Aorta (tissue), 5 donors: ENCODE measurements at regions of chr5 and their contacts with region 1.

Region 1: DNA sequence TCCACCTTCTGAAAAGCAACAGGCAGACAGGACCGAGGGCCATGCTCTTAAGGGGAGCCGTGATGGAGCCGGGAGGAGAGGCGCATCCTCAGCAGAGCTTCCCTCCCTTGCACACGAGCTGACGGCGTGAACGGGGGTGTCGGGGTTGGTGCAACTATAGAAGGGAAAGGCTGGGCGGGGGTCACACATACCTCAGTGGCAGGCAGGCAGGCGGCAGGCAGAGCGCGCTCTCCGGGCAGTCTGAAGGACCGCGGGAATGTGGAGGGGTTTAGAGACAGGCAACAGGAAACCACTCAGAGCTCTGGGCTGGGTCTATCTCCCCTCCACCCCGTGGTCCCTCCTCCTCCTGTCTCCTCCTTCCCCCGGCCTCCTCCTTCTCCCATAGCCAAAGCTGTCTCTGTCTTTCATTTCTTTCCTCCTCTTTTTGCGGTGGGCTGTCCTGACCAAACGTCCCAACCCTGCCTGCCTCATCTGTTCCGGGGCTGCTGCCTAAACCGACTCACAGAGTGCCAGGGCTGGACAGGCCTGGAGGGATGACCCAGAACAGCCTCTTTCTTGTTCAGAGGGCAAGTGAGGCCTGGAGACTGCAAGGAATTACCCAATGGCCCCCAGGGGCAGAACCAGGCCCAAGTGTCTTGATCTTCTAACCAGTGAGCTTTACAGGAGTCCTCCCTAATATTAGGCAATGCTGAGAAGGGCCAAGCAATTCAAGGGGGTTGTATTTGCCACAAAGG is at the start of gene SPARC:
- DNase-seq: peak; percentile 88 to 91
- ATAC-seq: peak; percentile 92
- H3K4me3 ChIP-seq: peak within 1 kb of the TSS; percentile 60 to 91
- H3K27ac ChIP-seq: peak within 1 kb of the TSS; percentile 78 to 90
- H3K4me1 ChIP-seq: peaks cover 8 to 13% of the 10 kb centered on the region in 2 donors
- H3K27me3 ChIP-seq: no peaks in the 10 kb centered on the region
- total RNA-seq, gene SPARC: 2,087 to 2,608 TPM

Region 2: DNA sequence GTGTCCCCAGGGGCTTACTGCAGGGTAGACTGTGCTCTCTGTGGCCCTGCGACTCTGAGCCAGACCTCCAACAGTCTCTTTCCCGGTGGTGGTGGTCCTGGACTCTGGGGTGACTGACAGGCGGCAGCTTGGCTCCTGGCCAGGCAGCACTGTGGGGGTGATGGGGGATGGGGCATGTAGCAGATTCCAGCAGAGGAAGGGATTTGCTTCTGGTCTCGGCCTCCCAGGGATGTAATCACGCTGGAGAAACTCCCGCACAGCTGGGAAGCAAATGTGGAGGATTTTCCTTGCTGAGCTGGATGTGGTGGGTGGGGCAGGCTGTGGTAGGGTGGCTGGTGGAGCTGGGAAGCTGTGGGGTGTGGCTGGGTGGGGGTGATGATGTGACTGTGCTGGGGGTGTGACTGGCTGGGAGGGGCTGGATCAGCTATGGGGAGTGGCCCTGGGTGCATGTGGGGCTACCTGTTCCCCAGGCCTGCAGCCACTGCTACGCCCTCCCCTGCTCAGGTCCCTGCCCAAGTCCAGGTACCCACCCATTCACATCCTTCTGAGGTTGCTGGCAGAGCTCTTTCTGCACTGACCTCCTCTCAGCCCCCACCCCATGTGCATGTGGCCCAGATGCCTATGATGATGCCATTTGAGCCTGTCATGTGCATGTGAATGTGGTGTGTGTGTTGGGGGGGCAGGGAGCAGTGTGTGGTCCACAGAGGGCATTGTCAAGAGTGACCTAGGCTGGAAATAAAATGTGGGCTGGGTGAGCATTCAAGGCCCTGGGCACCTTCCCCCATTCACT is 1175.1 kb before region 1 on chr5:
- intact Hi-C with region 1: no loop called
- DNase-seq: peak in 1 of 2 donors; percentile 63
- ATAC-seq: no peak
- H3K4me3 ChIP-seq: no peak overlapping the region
- H3K27ac ChIP-seq: peak overlapping the region in 1 of 2 donors; percentile 14
- H3K4me1 ChIP-seq: peaks cover 2 to 8% of the 10 kb centered on the region in 2 donors
- H3K27me3 ChIP-seq: no peaks in the 10 kb centered on the region

Region 3: GRCh38 chr5:151141535-151141934 is 545.3 kb before region 1 on chr5:
- intact Hi-C with region 1: no loop called
- DNase-seq: no peak
- ATAC-seq: peak; percentile 20
- H3K4me3 ChIP-seq: no peak overlapping the region
- H3K27ac ChIP-seq: no peak overlapping the region
- H3K4me1 ChIP-seq: no peaks in the 10 kb centered on the region
- H3K27me3 ChIP-seq: no peaks in the 10 kb centered on the region

Region 4: DNA sequence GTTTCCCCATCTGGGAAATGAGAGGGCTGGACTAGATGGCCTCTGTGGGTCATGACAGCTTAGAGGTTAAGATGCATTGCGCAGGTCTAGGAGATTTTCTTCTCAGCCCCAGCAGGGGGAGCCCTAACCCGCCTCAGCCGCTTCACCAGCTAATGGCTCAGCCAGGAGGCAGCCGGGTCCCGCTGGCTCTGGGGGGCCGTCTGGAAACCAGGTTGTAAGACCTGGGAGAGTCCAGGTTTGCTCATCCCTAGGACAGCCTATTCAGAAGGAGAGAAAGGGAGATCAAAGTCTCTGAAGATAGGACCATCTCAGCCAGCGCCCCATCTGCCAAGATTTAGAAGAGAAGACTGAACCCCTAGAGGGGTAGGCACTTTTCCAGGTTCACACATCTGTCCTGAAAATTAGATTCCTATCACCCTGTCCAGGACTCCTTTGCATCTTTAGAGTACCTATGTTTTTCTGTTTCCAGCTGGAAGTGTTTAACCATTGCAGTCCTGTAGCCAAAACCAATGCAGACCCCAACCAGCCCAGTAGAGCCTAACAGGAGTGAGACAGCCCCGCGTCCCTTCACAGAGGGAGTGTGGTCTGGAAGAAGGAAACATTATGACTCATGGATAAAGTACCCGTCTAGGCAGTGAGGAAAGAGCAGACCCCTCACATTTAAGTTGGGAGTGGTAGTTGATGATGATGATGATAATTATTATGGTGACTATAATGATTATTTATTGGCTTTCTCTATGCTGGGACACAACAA is 27.7 kb before region 1 on chr5:
- intact Hi-C with region 1: loop called in 1 of 2 experiments (anchors 1 kb)
- DNase-seq: peak; percentile 89 to 94
- ATAC-seq: peak; percentile 93
- H3K4me3 ChIP-seq: no peak overlapping the region
- H3K27ac ChIP-seq: no peak overlapping the region
- H3K4me1 ChIP-seq: no peaks in the 10 kb centered on the region
- H3K27me3 ChIP-seq: no peaks in the 10 kb centered on the region